Mucosa of descending colon (tissue), 3 donors: ENCODE measurements at regions of chr2 and their contacts with region 1.

Region 1: DNA sequence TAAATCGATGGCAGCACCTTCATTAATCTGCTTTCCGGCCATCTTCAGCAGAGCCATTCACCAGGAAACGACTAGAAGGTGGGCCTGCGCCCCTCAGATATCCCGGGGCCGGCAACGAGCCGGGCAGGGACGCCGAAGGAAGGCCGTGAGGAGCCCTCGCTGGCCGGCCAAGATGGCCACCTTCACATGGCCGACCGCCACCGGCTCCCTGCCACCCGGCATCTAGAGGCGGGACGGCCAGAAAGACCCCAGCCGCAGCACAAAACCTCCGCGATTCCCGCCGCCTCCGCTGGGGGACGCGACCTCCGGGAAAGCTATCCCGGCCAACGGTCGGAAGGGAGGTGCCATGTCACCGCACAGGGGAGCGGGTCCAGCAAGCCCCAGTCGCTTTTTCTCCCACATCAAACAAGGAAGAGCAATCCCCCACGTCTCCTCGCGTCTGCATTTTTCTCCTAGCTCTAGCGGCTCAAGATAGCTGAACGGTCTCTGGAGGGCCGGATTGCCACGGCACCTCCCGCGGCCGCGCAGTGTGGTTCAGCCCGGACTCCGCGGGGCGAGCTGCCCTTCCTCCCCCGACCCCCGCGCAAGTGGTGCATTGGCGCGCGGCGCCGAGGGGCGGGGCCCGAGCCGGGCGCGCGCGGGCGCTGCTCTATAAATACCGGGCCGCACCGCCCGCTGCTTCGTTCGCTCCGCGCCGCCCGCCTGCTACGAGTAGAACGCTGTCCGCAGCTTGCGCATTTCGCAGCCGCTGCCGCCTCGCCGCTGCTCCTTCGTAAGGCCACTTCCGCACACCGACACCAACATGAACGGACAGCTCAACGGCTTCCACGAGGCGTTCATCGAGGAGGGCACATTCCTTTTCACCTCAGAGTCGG is at the start of gene MAT2A:
- DNase-seq: peak; percentile 93 to 96 (median 94)
- ATAC-seq: peak; percentile 91
- H3K4me3 ChIP-seq: peak within 1 kb of the TSS; percentile 41
- H3K4me1 ChIP-seq: peaks cover 39% of the 10 kb centered on the region
- CTCF ChIP-seq: peak; percentile 72
- total RNA-seq, gene MAT2A: 156 to 229 (median 167) TPM

Region 2: DNA sequence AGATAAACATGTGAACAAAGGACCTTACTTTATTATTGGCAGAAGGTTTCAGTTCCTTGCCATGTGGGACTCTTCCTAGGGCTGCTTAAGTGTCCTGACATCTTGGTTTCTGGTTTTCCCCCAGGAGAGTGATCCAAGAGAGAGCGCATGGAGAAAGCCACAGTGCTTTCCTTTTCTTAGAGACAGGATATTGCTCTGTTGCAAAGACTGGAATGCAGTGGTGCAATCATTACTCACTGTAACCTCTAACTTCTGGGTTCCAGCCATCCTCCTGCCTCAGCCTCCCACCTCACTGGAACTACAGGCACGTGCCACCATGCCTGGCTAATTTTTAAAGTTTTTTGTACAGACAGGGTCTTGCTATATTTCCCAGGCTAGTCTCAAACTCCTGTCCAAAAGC is 443.6 kb before region 1 on chr2:
- intact Hi-C with region 1: no loop called
- DNase-seq: no peak
- ATAC-seq: no peak
- H3K4me3 ChIP-seq: no peak overlapping the region
- H3K4me1 ChIP-seq: no peaks in the 10 kb centered on the region
- CTCF ChIP-seq: no peak

Region 3: DNA sequence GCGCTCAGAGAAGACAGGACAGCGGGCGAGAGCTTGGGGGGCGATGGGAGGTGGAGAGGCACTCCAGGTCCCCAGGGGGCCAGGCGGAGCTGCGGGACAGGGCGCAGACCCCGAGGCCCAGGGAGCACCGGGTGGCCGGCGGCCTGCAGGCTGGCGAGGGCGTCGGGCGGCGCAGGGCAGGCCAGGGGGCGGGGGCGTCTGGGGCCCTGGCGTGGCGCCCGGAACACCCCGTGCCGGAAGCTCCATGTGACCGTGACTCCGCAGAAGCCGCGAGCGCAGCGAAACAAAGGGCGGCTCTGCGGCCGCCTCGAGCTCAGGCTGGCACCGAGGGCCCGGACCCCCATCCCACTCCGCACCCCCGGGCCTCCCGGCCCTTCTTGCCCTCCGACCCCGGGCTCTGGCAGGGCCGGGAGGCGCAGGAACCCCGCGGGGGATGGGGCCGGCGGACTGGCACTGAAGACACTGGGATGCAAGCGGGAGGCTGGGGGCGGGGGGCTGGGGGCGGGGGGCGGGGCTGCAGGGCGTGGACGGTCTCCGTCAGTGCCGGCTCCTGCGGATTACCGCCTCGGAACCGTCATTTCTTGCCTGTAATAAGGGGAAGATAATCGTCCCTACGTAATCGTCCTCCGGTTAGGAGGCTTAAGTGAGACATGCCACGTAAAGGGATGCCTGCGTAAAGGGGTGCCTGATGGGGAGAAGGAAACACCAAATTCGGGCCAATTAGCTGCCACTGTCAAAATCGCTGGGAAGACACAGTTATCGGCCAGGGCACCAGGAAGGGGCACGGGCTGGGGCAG is 101.0 kb before region 1 on chr2:
- intact Hi-C with region 1: loop called in 1 of 2 experiments (anchors 5 kb)
- DNase-seq: peak; percentile 81 to 92 (median 87)
- ATAC-seq: peak; percentile 83
- H3K4me3 ChIP-seq: no peak overlapping the region
- H3K4me1 ChIP-seq: peaks cover 20% of the 10 kb centered on the region
- CTCF ChIP-seq: no peak

Region 4: DNA sequence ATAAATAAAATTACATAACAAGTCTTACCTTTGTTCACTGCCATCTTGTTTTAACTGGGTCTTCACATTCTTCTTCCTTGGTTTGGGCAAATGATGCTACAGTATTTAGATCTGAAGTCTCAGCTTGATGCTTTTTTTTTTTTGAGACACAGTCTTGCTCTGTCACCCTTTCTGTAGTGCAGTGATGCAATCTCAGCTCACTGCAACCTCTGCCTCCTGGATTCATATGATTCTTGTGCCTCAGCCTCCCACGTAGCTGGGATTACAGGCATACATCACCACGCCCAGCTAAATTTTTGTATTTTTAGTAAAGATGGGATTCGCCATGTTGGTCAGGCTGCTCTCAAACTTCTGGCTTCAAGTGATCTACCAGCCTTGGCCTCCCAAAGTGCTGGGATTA is 52.9 kb before region 1 on chr2:
- intact Hi-C with region 1: no loop called
- DNase-seq: no peak
- ATAC-seq: no peak
- H3K4me3 ChIP-seq: no peak overlapping the region
- H3K4me1 ChIP-seq: no peaks in the 10 kb centered on the region
- CTCF ChIP-seq: no peak

Region 5: GRCh38 chr2:85694052-85695025 is 155.6 kb after region 1 on chr2 and contains the start of gene GNLY:
- intact Hi-C with region 1: no loop called
- DNase-seq: no peak
- ATAC-seq: no peak
- H3K4me3 ChIP-seq: no peak within 1 kb of the TSS
- H3K4me1 ChIP-seq: no peaks in the 10 kb centered on the region
- CTCF ChIP-seq: no peak
- total RNA-seq, gene GNLY: 3.0 to 6.5 (median 4.3) TPM